CD4-positive, alpha-beta T cell (primary cell): ENCODE measurements at regions of chrX and their contacts with region 1.

Region 1: GRCh38 chrX:101564651-101565165 is 14.4 kb downstream of the ARMCX1 start:
- DNase-seq: no peak
- ATAC-seq: no peak
- H3K4me3 ChIP-seq: no peak overlapping the region
- H3K4me3 Mint-ChIP-seq: no peak overlapping the region
- H3K27ac ChIP-seq: no peak overlapping the region
- H3K27ac Mint-ChIP-seq: no peak overlapping the region
- H3K4me1 ChIP-seq: no peaks in the 10 kb centered on the region
- H3K4me1 Mint-ChIP-seq: no peaks in the 10 kb centered on the region
- H3K27me3 ChIP-seq: no peaks in the 10 kb centered on the region
- H3K27me3 Mint-ChIP-seq: peaks cover 4% of the 10 kb centered on the region
- CTCF ChIP-seq: no peak

Region 2: GRCh38 chrX:101507372-101507771 is 57.3 kb before region 1 on chrX:
- CTCF ChIA-PET with region 1: no interaction called
- POLR2A ChIA-PET with region 1: no interaction called
- intact Hi-C with region 1: loop called in 1 of 2 experiments (anchors 10 kb)
- DNase-seq: no peak
- ATAC-seq: no peak
- H3K4me3 ChIP-seq: no peak overlapping the region
- H3K4me3 Mint-ChIP-seq: no peak overlapping the region
- H3K27ac ChIP-seq: no peak overlapping the region
- H3K27ac Mint-ChIP-seq: no peak overlapping the region
- H3K4me1 ChIP-seq: no peaks in the 10 kb centered on the region
- H3K4me1 Mint-ChIP-seq: no peaks in the 10 kb centered on the region
- H3K27me3 ChIP-seq: no peaks in the 10 kb centered on the region
- H3K27me3 Mint-ChIP-seq: no peaks in the 10 kb centered on the region
- CTCF ChIP-seq: no peak

Region 3: GRCh38 chrX:101617211-101618191 is 52.8 kb after region 1 on chrX and contains the start of gene ARMCX6:
- CTCF ChIA-PET with region 1: no interaction called
- POLR2A ChIA-PET with region 1: no interaction called
- intact Hi-C with region 1: no loop called
- DNase-seq: peak; percentile 45 to 89 (median 60)
- ATAC-seq: peak; percentile 86
- H3K4me3 ChIP-seq: peak within 1 kb of the TSS; percentile 77
- H3K4me3 Mint-ChIP-seq: peak within 1 kb of the TSS; percentile 97
- H3K27ac ChIP-seq: peak within 1 kb of the TSS; percentile 34 to 41
- H3K27ac Mint-ChIP-seq: peak within 1 kb of the TSS; percentile 92
- H3K4me1 ChIP-seq: peaks cover 14% of the 10 kb centered on the region
- H3K4me1 Mint-ChIP-seq: peaks cover 21% of the 10 kb centered on the region
- H3K27me3 ChIP-seq: no peaks in the 10 kb centered on the region
- H3K27me3 Mint-ChIP-seq: no peaks in the 10 kb centered on the region
- CTCF ChIP-seq: no peak
- total RNA-seq, gene ARMCX6: 35.0 to 39.5 TPM